Heart right ventricle (tissue), 16 donors: ENCODE measurements at regions of chr1 and their contacts with region 1.

Region 1: GRCh38 chr1:75079538-75080290 is 54.5 kb upstream of the LHX8 start:
- DNase-seq: no peak
- ATAC-seq: no peak
- H3K4me3 ChIP-seq: no peak overlapping the region
- H3K27ac ChIP-seq: no peak overlapping the region
- H3K4me1 ChIP-seq: no peaks in the 10 kb centered on the region
- H3K27me3 ChIP-seq: no peaks in the 10 kb centered on the region
- CTCF ChIP-seq: no peak

Region 2: DNA sequence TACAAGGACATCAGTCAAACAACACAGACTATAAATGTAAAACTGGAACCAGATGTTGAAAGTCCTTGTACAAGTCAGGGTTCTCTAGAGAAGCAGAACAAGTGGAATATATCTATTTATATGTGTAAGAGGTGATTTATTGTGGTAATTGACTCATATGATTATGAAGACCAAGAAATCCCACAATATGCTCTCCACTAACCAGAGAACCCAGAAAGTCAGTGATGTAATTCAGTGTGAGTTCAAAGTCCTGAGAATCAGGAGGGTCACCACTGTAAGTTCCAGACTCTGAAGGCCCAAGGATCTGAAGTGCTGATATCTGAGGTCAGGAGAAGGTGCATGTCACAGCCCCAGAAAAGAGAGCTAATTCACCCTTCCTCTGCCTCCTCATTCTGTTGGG is 624.3 kb before region 1 on chr1:
- intact Hi-C with region 1: loop called in 1 of 10 experiments (anchors 5 kb)
- DNase-seq: no peak
- ATAC-seq: no peak
- H3K4me3 ChIP-seq: no peak overlapping the region
- H3K27ac ChIP-seq: no peak overlapping the region
- H3K4me1 ChIP-seq: no peaks in the 10 kb centered on the region
- H3K27me3 ChIP-seq: no peaks in the 10 kb centered on the region
- CTCF ChIP-seq: no peak

Region 3: DNA sequence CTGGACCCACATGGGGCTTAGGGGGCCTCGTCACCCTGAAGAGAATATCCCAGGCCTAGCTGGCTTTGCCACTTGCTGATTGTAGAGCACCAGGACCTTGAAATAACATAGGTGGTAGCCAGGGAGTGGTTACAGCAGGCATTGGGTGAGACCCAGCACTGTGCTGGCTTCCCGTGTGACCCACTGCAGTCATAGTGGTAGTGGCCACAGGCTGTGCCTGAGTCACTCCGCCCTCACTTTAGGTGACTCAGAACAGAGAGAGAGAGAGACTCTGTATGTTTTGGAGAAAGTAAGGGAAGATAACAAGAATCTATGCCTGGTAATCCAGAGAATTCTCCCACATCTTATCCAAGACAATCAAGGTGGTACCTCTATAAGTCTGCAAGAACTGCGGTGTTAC is 44.2 kb before region 1 on chr1:
- intact Hi-C with region 1: no loop called
- DNase-seq: no peak
- ATAC-seq: no peak
- H3K4me3 ChIP-seq: no peak overlapping the region
- H3K27ac ChIP-seq: no peak overlapping the region
- H3K4me1 ChIP-seq: no peaks in the 10 kb centered on the region
- H3K27me3 ChIP-seq: no peaks in the 10 kb centered on the region
- CTCF ChIP-seq: no peak

Region 4: GRCh38 chr1:75124510-75124909 is 44.8 kb after region 1 on chr1:
- intact Hi-C with region 1: no loop called
- DNase-seq: no peak
- ATAC-seq: no peak
- H3K4me3 ChIP-seq: no peak overlapping the region
- H3K27ac ChIP-seq: no peak overlapping the region
- H3K4me1 ChIP-seq: peaks cover 0 to 4% (median 0%) of the 10 kb centered on the region in 9 donors
- H3K27me3 ChIP-seq: peaks cover 8 to 94% (median 69%) of the 10 kb centered on the region in 7 donors
- CTCF ChIP-seq: no peak